ENCODE measurements at regions of chrX and their contacts with region 1.

Region 1: DNA sequence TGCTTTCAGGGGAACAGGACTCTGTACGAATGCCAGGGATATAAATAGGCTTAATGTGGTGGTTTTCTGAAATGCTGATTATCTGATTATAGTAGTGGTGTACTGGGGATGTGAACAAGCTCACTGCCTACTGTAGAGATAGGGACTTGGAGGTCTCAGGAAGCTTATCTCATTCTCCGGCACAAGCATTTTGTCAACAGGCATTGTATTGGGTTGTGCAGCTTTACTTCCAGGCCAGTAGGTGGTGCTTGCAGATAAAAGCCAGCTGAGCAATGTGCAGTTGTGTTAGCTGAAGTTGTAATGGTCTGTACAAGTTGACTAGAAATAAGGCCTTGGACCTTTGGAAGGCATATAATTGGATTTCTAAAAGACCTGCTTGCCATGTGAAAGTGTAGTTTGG is 49.5 kb upstream of the TMLHE start:
- DNase-seq: no peak
- H3K4me3 ChIP-seq: no peak overlapping the region
- H3K27ac ChIP-seq: no peak overlapping the region
- H3K4me1 ChIP-seq: no peaks in the 10 kb centered on the region
- H3K27me3 ChIP-seq: no peaks in the 10 kb centered on the region
- CTCF ChIP-seq: peak; percentile 17 to 55

Region 2: GRCh38 chrX:155246748-155247147 is 415.5 kb before region 1 on chrX:
- CTCF ChIA-PET with region 1: no interaction called
- dilution Hi-C with region 1: no loop called
- in situ Hi-C with region 1: no loop called
- intact Hi-C with region 1: no loop called
- DNase-seq: no peak
- H3K4me3 ChIP-seq: no peak overlapping the region
- H3K27ac ChIP-seq: no peak overlapping the region
- H3K4me1 ChIP-seq: no peaks in the 10 kb centered on the region
- H3K27me3 ChIP-seq: no peaks in the 10 kb centered on the region
- CTCF ChIP-seq: no peak

Region 3: GRCh38 chrX:155389634-155390033 is 272.6 kb before region 1 on chrX:
- CTCF ChIA-PET with region 1: no interaction called
- dilution Hi-C with region 1: no loop called
- in situ Hi-C with region 1: no loop called
- intact Hi-C with region 1: no loop called
- DNase-seq: no peak
- H3K4me3 ChIP-seq: no peak overlapping the region
- H3K27ac ChIP-seq: no peak overlapping the region
- H3K4me1 ChIP-seq: no peaks in the 10 kb centered on the region
- H3K27me3 ChIP-seq: no peaks in the 10 kb centered on the region
- CTCF ChIP-seq: no peak

Region 4: GRCh38 chrX:155718972-155719586 is 56.8 kb after region 1 on chrX:
- CTCF ChIA-PET with region 1: no interaction called
- dilution Hi-C with region 1: loop called (anchors 5 kb)
- in situ Hi-C with region 1: no loop called
- intact Hi-C with region 1: no loop called
- DNase-seq: peak; percentile 9
- H3K4me3 ChIP-seq: no peak overlapping the region
- H3K27ac ChIP-seq: no peak overlapping the region
- H3K4me1 ChIP-seq: peaks cover 5% of the 10 kb centered on the region
- H3K27me3 ChIP-seq: no peaks in the 10 kb centered on the region
- CTCF ChIP-seq: no peak

Measured in mammary epithelial cell (primary cell).